ENCODE measurements at regions of chr12 and their contacts with region 1.

Region 1: GRCh38 chr12:123141615-123142517 is 9.0 kb downstream of the PITPNM2 start:
- DNase-seq: peak; percentile 69
- ATAC-seq: peak; percentile 83

Region 2: GRCh38 chr12:122137681-122138080 is 1004.2 kb before region 1 on chr12:
- intact Hi-C with region 1: no loop called
- DNase-seq: no peak
- ATAC-seq: no peak

Region 3: GRCh38 chr12:122951979-122952892 is 189.6 kb before region 1 on chr12:
- intact Hi-C with region 1: no loop called
- DNase-seq: peak; percentile 87
- ATAC-seq: peak; percentile 95

Region 4: DNA sequence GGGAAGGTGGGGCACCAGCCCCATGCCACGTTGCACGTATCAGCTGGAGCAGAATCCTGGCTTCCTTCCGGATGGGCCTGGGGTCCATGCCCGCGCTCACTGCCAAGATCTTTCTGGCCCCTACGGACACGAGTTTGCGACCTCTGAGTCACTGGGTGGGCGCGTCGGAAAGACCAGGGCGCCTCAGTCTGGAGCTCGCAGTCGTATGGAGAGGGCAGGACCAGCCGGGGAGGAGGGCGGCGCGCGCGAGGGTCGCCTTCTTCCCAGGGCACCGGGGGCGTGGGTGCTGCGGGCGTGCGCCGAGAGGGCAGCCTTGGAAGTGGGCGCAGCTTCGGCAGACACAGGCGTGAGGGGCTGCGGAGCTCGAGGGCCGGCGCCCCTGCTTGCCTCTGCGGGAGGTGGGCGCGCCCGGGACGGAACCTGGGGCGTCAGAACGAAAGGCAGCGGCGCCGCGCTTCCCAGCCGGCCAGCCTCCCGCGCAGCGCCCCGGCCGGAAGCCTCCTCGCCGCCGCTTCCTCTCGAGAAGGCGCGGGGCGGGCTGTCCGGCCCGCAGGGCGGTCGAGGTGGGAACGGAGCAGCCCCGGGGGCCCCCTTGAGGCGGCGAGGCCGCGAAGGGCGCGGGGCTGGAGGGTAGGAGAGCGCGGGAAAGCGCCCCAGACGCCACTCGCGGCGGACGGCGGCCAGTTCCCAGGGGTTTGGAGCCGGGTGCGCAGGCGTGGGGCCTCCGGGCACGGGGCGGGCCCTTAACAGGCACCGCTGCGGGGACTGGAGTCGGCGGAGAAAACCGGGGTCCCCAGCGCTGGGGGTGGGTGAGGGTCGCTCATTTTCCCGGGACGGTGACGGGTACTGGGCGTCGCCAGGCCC is 161.5 kb before region 1 on chr12 and contains the start of gene ARL6IP4:
- intact Hi-C with region 1: loop called (anchors 10 kb)
- DNase-seq: peak; percentile 81
- ATAC-seq: peak; percentile 68
- total RNA-seq, gene ARL6IP4: 136 TPM

Region 5: DNA sequence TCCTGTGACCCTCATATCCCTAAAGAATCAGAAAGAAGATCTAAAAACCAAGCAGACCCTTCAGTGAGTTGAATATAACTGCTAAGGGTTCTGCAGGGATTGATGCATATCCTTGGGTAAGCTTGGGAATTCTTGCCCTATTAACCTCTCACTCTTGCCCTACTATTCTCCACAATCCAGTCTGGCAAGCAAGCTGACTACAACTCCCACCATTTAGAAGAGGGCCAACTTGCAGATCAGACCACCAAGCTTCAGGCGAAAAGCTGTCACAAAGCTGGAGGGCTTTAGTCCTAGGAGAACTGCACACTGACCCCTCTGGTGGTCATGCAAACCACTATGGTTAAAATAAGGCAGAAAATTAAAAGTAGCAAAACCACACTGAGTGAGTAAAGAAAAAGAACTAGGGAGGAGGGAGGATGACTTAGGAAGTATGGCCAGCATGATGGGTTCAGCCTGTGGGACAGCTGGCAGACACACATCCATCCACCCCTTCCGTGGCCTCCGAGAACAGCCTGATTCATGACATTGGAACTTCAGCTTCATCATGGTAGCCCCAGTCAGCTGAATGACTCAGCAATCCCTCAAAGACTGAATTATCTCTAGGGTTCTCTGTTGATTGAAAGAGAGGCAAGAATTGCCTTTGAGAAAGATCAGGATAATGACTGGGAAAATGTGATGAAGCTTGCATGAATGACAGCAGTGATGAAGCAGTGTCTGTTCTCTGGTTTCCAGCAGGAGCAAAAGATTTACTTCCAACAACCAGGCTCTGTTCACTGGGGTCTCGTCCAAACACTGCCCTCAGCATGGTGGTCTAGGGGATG is 15.5 kb before region 1 on chr12:
- intact Hi-C with region 1: no loop called
- DNase-seq: peak; percentile 70
- ATAC-seq: peak; percentile 85

Region 6: DNA sequence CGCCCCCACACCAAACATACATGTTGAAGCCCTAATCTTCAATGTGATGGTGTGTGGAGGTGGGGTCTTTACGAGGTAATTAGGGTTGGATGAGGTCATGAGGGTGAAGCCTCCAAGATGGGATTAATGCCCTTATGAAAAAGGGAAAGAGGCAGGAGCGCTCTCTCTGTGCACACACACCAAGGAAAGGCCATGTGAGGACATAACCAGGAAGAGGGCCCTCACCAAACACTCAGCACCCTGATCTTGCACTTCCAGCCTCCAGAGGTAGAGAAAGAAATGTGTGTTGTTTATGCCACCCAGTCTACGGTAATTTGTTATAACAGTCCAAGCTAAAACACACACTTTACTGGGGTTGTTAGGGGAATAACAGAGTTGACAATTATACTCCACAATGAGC is 23.7 kb after region 1 on chr12:
- intact Hi-C with region 1: no loop called
- DNase-seq: no peak
- ATAC-seq: no peak